ENCODE measurements at regions of chr2 and their contacts with region 1.

Region 1: GRCh38 chr2:171692331-171692730 is 5.1 kb downstream of the DYNC1I2 start:
- DNase-seq: no peak
- H3K4me3 ChIP-seq: no peak overlapping the region
- H3K27ac ChIP-seq: no peak overlapping the region
- H3K4me1 ChIP-seq: peaks cover 14 to 43% (median 23%) of the 10 kb centered on the region in 6 donors
- H3K27me3 ChIP-seq: no peaks in the 10 kb centered on the region
- CTCF ChIP-seq: no peak
- POLR2A ChIP-seq: no peak

Region 2: GRCh38 chr2:171574149-171574795 is 118.1 kb before region 1 on chr2:
- intact Hi-C with region 1: no loop called
- DNase-seq: peak; percentile 95
- H3K4me3 ChIP-seq: peak overlapping the region in 1 of 8 donors; percentile 25
- H3K27ac ChIP-seq: no peak overlapping the region
- H3K4me1 ChIP-seq: peaks cover 0 to 6% (median 0%) of the 10 kb centered on the region in 6 donors
- H3K27me3 ChIP-seq: no peaks in the 10 kb centered on the region
- CTCF ChIP-seq: peak; percentile 81 to 98 (median 95)
- POLR2A ChIP-seq: no peak

Region 3: GRCh38 chr2:172484253-172484652 is 791.9 kb after region 1 on chr2:
- intact Hi-C with region 1: loop called (anchors 10 kb)
- DNase-seq: no peak
- H3K4me3 ChIP-seq: no peak overlapping the region
- H3K27ac ChIP-seq: peak overlapping the region in 1 of 8 donors; percentile 17
- H3K4me1 ChIP-seq: peaks cover 8 to 50% (median 15%) of the 10 kb centered on the region in 6 donors
- H3K27me3 ChIP-seq: no peaks in the 10 kb centered on the region
- CTCF ChIP-seq: peak in 5 of 11 experiments; percentile 9 to 32 (median 20)
- POLR2A ChIP-seq: no peak

Measured in spleen (tissue), 13 donors.